Right cardiac atrium (tissue), 5 donors: ENCODE measurements at regions of chr11 and their contacts with region 1.

Region 1: GRCh38 chr11:126345759-126346585 is 9.5 kb upstream of the ST3GAL4 start:
- DNase-seq: peak; percentile 80 to 84 (median 83)
- ATAC-seq: peak; percentile 60 to 86
- H3K4me3 ChIP-seq: no peak overlapping the region
- H3K27ac ChIP-seq: peak overlapping the region; percentile 73
- H3K4me1 ChIP-seq: peaks cover 25% of the 10 kb centered on the region
- H3K27me3 ChIP-seq: no peaks in the 10 kb centered on the region

Region 2: DNA sequence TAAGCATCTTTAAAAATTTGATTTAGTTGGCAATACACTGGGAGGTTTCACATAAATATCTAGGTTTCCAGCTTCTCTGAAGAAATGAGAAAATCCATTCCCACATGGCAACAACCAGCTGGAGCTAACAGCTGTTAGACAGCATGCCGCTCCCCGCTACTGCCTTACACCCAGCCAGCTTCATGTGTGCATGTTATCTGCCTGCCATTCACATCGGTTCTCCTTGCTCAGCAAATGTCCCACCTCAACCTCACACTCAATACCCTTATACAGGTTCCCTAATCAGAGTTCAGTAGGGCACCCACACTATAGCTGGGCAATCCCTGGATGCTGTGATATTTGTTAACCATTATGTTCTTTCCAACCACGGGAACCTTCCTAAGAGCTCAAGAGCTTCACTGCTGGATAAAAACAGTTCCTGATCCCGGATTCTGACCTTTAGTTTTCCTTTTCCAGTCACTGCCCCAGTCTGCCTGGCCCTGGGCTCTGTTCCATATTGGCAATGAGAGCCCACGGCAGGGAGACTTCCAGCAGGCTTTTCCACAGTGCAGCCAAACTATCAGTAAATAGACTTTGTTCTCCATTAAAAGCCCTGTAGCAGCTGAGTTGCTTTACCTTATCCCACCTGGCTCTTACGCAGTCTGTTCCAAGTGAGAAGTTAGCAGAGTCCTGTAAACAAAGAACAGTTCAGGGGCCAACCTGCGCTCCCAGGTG is 143.2 kb before region 1 on chr11:
- intact Hi-C with region 1: no loop called
- DNase-seq: no peak
- ATAC-seq: peak; percentile 25 to 41
- H3K4me3 ChIP-seq: no peak overlapping the region
- H3K27ac ChIP-seq: no peak overlapping the region
- H3K4me1 ChIP-seq: no peaks in the 10 kb centered on the region
- H3K27me3 ChIP-seq: no peaks in the 10 kb centered on the region

Region 3: GRCh38 chr11:126416542-126417090 is 70.6 kb after region 1 on chr11:
- intact Hi-C with region 1: loop called in 1 of 4 experiments (anchors 5 kb)
- DNase-seq: peak; percentile 94 to 98 (median 97)
- ATAC-seq: peak; percentile 80 to 84
- H3K4me3 ChIP-seq: peak overlapping the region; percentile 8
- H3K27ac ChIP-seq: peak overlapping the region; percentile 93
- H3K4me1 ChIP-seq: peaks cover 26% of the 10 kb centered on the region
- H3K27me3 ChIP-seq: no peaks in the 10 kb centered on the region